K562 (cell line): ENCODE measurements at regions of chr5 and their contacts with region 1.

Region 1: DNA sequence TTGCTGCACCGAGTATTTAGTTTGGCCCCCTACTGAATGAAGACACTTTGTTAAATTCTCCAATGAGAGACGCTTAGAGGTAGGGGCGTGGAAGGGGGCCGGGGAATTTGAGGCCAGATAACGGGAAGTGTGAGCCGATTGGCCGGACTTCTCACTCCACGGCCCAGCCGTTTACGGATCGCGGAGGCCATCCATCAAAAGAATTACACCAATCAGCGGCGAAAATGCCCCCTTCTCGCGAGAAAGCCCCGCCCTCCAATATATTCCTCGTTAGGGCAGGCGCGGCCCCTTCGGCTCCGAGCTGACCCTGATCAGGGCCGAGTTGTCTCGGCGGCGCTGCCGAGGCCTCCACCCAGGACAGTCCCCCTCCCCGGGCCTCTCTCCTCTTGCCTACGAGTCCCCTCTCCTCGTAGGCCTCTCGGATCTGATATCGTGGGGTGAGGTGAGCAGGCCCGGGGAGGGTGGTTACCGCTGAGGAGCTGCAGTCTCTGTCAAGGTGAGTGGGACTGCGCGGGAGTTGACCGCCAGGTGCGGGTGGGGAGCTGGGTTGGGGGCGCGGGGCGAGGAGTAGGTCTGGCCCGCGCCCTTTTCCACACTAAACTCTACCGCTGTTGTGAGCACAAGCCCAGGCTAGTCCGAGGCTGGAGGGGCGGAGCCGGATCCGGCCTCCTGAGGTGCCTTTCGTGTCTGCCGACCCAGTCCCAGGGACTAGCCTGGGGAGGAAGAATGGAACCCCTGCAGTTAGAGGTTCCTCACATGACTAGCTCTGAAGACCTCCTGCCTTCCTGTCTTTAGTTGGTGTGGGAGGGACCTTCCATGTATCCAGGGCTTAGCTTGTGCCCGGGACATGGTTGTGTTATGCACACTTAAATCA is at the start of gene CCNG1:
- DNase-seq: peak; percentile 89 to 98 (median 94)
- ATAC-seq: peak; percentile 84
- H3K4me3 ChIP-seq: peak within 1 kb of the TSS; percentile 71
- H3K27ac ChIP-seq: peak within 1 kb of the TSS; percentile 80
- H3K4me1 ChIP-seq: peaks cover 3 to 33% of the 10 kb centered on the region in 2 experiments; a peak in 4 of 5 replicates
- H3K27me3 ChIP-seq: no peaks in the 10 kb centered on the region
- CTCF ChIP-seq: 0 out of 6 replicates have a peak, but pooled peaks of 1 of the 3 experiments have one; percentile 1
- EP300 ChIP-seq: no peak
- POLR2A ChIP-seq: peak; percentile 96
- RAD21 ChIP-seq: no peak
- polyA plus RNA-seq, gene CCNG1: 254 to 290 TPM

Region 2: DNA sequence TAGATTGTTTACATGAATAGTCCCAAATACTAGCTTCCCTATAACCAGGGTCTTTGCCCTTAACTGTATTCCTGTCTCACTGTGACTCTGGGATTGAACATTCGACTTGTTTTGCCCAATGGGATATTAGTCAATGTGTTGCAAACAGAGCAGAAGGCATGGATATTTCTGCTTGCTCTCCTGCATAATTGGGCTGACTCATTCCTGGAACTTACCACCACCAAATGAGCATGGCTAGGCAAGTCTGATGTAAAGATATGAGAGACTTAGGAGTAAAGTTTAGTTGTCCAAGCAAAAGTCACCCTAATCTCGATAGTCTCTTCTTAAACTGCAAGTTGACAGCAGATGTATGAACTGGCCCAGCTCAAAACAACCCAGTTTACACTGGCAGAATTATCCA is 273.7 kb before region 1 on chr5:
- CTCF ChIA-PET with region 1: no interaction called
- POLR2A ChIA-PET with region 1: no interaction called
- in situ Hi-C with region 1: no loop called
- intact Hi-C with region 1: no loop called
- DNase-seq: no peak
- ATAC-seq: no peak
- H3K4me3 ChIP-seq: no peak overlapping the region
- H3K27ac ChIP-seq: no peak overlapping the region
- H3K4me1 ChIP-seq: no peaks in the 10 kb centered on the region
- H3K27me3 ChIP-seq: no peaks in the 10 kb centered on the region
- CTCF ChIP-seq: no peak
- EP300 ChIP-seq: no peak
- POLR2A ChIP-seq: no peak
- RAD21 ChIP-seq: no peak

Region 3: GRCh38 chr5:163385271-163385670 is 52.3 kb before region 1 on chr5:
- CTCF ChIA-PET with region 1: no interaction called
- POLR2A ChIA-PET with region 1: interaction called, 3 read pairs
- in situ Hi-C with region 1: loop called (anchors 5 kb)
- intact Hi-C with region 1: no loop called
- DNase-seq: no peak
- ATAC-seq: peak; percentile 62
- H3K4me3 ChIP-seq: no peak overlapping the region
- H3K27ac ChIP-seq: no peak overlapping the region
- H3K4me1 ChIP-seq: 0 out of 5 replicates have a peak, but pooled peaks cover 0 to 5% of the 10 kb centered on the region in 2 experiments
- H3K27me3 ChIP-seq: no peaks in the 10 kb centered on the region
- CTCF ChIP-seq: no peak
- EP300 ChIP-seq: no peak
- POLR2A ChIP-seq: no peak
- RAD21 ChIP-seq: no peak

Region 4: DNA sequence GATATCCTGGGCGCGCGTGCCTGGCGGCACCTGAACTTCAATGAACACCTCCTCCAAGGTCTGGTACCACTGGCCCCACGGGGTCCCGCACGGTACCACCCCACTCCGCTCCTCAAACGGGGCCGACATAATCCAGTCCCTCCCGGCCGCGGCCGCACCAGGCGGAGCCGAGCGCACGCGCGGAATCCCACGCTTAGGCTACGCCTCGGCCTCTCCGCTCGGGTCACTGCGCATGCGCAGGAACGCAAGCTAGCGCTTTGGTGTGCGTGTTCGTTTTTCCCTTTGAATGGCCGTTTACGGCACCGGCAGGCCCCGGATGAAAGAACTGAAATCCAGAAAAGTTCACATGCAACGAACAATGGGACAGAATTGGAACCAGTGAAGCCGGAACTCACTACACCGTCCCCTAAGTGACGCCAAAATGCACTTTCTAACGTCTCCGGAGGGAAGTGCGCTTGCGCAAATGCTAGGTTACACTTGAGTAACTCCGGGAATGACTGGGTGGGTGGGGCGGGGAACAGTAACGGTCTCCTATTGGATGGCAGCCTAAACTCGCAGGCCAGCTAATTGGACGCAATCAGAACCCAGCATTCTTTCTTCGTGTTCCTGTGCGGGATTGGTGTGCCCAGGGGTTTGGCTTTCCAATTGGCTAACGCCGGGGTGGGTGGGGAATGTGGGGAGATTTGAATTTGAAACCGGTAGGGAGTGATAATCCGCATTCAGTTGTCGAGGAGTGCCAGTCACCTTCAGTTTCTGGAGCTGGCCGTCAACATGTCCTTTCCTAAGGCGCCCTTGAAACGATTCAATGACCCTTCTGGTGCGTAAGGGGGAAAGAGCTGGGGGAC is 22.6 kb after region 1 on chr5 and contains the starts of genes HMMR and NUDCD2:
- CTCF ChIA-PET with region 1: no interaction called
- POLR2A ChIA-PET with region 1: interaction called, 126 read pairs
- in situ Hi-C with region 1: no loop called
- intact Hi-C with region 1: loop called (anchors 1 kb)
- DNase-seq: peak; percentile 82 to 97 (median 90)
- ATAC-seq: peak; percentile 79
- H3K4me3 ChIP-seq: peak within 1 kb of the TSS; percentile 70
- H3K27ac ChIP-seq: peak within 1 kb of the TSS; percentile 100
- H3K4me1 ChIP-seq: peaks cover 8 to 9% of the 10 kb centered on the region in 2 experiments; a peak in 4 of 5 replicates
- H3K27me3 ChIP-seq: no peaks in the 10 kb centered on the region
- CTCF ChIP-seq: no peak; a peak in 1 of 6 replicates
- EP300 ChIP-seq: no peak
- POLR2A ChIP-seq: peak; percentile 90
- RAD21 ChIP-seq: peak in 1 of 2 experiments; percentile 5; a peak in 1 of 4 replicates
- polyA plus RNA-seq, gene HMMR: 81.7 to 86.0 TPM
- polyA plus RNA-seq, gene NUDCD2: 14.6 to 22.5 TPM

Region 5: DNA sequence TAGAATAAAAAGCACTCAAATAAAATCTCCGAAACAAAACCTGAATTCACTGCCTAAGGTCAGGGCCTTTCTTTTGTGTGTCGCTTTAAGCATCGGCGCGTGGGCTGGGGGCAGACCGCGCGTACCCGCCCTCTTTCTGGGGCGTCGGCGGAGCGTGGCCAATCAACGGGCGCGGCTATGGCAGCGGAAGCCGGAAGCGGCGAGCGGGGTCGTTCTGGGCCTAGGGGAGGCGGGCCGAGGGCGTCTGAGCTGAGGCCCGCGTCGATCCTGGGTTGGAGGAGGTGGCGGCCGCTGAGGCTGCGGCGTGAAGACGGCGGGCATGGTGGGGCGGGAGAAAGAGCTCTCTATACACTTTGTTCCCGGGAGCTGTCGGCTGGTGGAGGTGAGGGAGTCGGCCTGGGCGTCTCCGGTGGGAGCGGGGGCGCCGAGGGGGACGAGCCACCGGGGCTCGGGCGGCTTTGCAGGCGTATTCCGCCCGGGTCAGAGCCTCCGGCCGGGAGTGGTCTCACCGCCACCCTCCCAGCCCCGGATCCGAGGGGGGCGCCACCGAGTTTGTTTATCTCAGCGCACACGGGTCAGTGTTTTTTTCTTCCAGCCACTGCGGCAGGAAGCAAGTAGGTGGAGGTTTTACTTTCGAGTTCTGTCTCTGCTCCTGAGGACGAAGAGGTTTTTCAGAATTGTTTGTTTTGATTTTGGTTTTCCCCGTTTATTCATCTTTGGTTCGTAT is 68.0 kb after region 1 on chr5 and contains the start of gene MAT2B:
- CTCF ChIA-PET with region 1: no interaction called
- POLR2A ChIA-PET with region 1: interaction called, 4 read pairs
- in situ Hi-C with region 1: no loop called
- intact Hi-C with region 1: loop called (anchors 1 kb)
- DNase-seq: peak; percentile 95 to 97 (median 96)
- ATAC-seq: peak; percentile 88
- H3K4me3 ChIP-seq: peak within 1 kb of the TSS; percentile 65
- H3K27ac ChIP-seq: peak within 1 kb of the TSS; percentile 87
- H3K4me1 ChIP-seq: peaks cover 5 to 7% of the 10 kb centered on the region in 2 experiments; a peak in 3 of 5 replicates
- H3K27me3 ChIP-seq: no peaks in the 10 kb centered on the region
- CTCF ChIP-seq: peak; percentile 67 to 75 (median 69)
- EP300 ChIP-seq: no peak; the same call in 1 of the 2 replicates
- POLR2A ChIP-seq: peak; percentile 98
- RAD21 ChIP-seq: no peak
- polyA plus RNA-seq, gene MAT2B: 47.1 to 57.7 TPM

Region 6: GRCh38 chr5:163595932-163596607 is 158.5 kb after region 1 on chr5:
- CTCF ChIA-PET with region 1: no interaction called
- POLR2A ChIA-PET with region 1: no interaction called
- in situ Hi-C with region 1: no loop called
- intact Hi-C with region 1: no loop called
- DNase-seq: no peak
- ATAC-seq: no peak
- H3K4me3 ChIP-seq: no peak overlapping the region
- H3K27ac ChIP-seq: no peak overlapping the region
- H3K4me1 ChIP-seq: no peaks in the 10 kb centered on the region
- H3K27me3 ChIP-seq: no peaks in the 10 kb centered on the region
- CTCF ChIP-seq: no peak
- EP300 ChIP-seq: no peak
- POLR2A ChIP-seq: no peak
- RAD21 ChIP-seq: no peak

Region 7: DNA sequence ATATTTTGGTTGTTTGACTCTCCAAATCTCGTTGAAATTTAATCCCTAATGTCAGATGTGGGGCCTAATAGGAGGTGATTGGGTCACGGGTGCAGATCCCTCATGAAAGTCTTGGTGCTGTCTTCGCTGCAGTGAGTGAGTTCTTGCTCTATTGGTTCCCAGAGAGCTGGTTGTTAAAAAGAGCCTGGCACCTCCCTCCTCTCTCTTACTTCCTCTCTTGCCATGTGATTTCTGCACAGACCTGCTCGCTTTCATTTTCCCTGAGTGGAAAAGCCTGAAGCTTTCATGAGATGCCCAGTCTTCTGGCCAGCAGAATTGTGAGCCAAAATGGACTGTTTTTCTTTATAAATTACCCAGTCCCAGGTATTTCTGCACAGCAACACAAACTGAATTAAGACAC is 289.5 kb after region 1 on chr5:
- CTCF ChIA-PET with region 1: no interaction called
- POLR2A ChIA-PET with region 1: no interaction called
- in situ Hi-C with region 1: no loop called
- intact Hi-C with region 1: no loop called
- DNase-seq: no peak
- ATAC-seq: no peak
- H3K4me3 ChIP-seq: no peak overlapping the region
- H3K27ac ChIP-seq: no peak overlapping the region
- H3K4me1 ChIP-seq: no peaks in the 10 kb centered on the region
- H3K27me3 ChIP-seq: no peaks in the 10 kb centered on the region
- CTCF ChIP-seq: no peak
- EP300 ChIP-seq: no peak
- POLR2A ChIP-seq: no peak
- RAD21 ChIP-seq: no peak